Activated CD4-positive, alpha-beta T cell treated with anti-CD3 and anti-CD28 coated beads, Interleukin-2, amount 10 ng/mL, durations not matched to agents 24 days and 14 days (primary cell): ENCODE measurements at regions of chr13 and their contacts with region 1.

Region 1: GRCh38 chr13:94327318-94327717 is 152.2 kb downstream of the DCT start:
- DNase-seq: peak; percentile 74
- H3K4me3 Mint-ChIP-seq: peak overlapping the region; percentile 62
- H3K27ac Mint-ChIP-seq: peak overlapping the region; percentile 72
- H3K4me1 Mint-ChIP-seq: peaks cover 65% of the 10 kb centered on the region
- H3K27me3 Mint-ChIP-seq: peaks cover 2% of the 10 kb centered on the region

Region 2: DNA sequence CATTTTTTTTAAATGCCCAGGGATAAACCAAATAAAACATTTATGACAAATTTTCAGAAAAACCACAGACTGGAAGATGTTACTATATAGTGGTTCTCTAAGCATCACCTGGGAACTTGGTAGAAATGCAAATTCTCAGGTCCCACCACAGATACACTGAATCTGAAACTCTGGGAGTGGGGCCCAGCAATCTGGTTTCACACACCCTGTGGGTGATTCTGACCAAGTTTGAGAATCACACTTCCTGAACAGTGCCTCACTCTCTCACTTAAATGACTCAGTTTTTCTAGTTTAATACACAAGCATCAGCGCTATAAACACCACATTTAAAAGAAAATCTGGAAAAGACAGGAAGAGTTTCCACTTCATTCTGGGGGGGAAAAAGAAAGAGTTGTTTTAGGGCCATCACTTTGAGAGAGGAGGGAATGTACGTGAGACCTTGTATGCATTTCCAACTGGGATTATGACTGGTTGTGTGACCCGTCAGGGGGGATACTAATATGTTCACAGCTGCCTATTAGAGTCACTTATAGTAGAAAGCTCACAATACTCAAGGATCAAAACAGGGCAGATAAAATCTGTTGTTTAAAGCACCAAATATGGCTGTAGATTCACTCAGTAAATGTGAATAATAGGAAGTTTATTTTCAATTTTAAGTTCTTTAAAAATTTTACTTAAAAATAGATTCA is 533.0 kb before region 1 on chr13:
- intact Hi-C with region 1: loop called (anchors 10 kb)
- DNase-seq: peak; percentile 63
- H3K4me3 Mint-ChIP-seq: no peak overlapping the region
- H3K27ac Mint-ChIP-seq: peak overlapping the region; percentile 1
- H3K4me1 Mint-ChIP-seq: peaks cover 8% of the 10 kb centered on the region
- H3K27me3 Mint-ChIP-seq: peaks cover 14% of the 10 kb centered on the region

Region 3: DNA sequence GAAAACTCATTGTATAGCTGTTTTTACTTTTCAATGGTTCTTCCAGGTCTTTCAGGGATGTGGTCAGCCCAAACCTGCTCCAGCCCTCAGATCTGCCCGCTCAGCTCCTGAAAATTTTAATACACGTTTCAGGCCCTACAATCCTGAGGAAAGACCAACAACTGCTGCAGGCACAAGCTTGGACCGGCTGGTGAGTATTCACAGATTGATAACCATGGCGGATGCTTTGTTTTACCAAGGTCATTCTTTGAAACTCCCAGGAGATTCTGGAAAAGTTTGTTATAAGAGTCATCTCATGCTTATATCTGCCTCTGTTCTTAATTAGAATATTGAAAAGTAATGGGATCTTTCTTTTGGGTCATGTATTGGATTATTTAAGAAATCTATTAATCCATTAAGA is 21.4 kb before region 1 on chr13:
- intact Hi-C with region 1: no loop called
- DNase-seq: no peak
- H3K4me3 Mint-ChIP-seq: no peak overlapping the region
- H3K27ac Mint-ChIP-seq: no peak overlapping the region
- H3K4me1 Mint-ChIP-seq: peaks cover 5% of the 10 kb centered on the region
- H3K27me3 Mint-ChIP-seq: peaks cover 8% of the 10 kb centered on the region

Region 4: GRCh38 chr13:94317063-94317491 is 10.2 kb before region 1 on chr13:
- intact Hi-C with region 1: loop called (anchors 1 kb)
- DNase-seq: peak; percentile 74
- H3K4me3 Mint-ChIP-seq: peak overlapping the region; percentile 60
- H3K27ac Mint-ChIP-seq: peak overlapping the region; percentile 78
- H3K4me1 Mint-ChIP-seq: peaks cover 38% of the 10 kb centered on the region
- H3K27me3 Mint-ChIP-seq: no peaks in the 10 kb centered on the region

Region 5: GRCh38 chr13:94345374-94346195 is 18.3 kb after region 1 on chr13:
- intact Hi-C with region 1: loop called (anchors 1 kb)
- DNase-seq: peak; percentile 64
- H3K4me3 Mint-ChIP-seq: no peak overlapping the region
- H3K27ac Mint-ChIP-seq: no peak overlapping the region
- H3K4me1 Mint-ChIP-seq: peaks cover 13% of the 10 kb centered on the region
- H3K27me3 Mint-ChIP-seq: peaks cover 12% of the 10 kb centered on the region

Region 6: DNA sequence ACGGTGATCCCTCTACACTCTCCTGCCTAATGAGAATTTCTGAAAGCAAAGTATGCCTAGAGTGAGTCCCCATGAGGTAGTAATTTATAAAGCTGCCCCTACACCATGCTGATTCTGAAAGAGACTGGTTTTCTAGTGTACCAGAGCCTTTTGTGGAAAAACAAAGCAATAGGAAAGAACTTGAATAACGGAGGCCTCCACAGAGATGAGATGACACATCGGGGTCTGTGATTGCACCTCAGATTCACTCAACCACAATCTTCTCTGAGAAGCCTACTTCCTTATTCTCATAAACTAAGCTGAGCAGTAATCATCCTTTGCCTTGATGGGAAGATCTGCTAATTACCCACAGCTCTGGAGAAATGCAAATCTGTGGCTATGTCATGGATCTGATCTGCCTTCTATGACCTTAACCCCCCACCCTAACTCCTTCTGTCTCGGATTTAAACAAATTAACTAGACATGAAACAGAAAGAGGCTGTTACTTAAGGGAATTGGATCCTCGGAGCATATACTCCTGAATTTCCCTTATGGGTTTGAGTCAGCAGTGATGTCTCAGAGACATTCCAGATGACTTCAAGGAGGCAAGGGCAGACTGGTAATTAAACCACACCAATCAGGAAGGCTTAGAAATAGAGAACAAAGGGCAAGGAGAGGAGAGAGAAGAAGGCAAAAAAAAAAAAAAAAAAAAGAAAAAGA is 24.1 kb after region 1 on chr13:
- intact Hi-C with region 1: loop called (anchors 1 kb)
- DNase-seq: no peak
- H3K4me3 Mint-ChIP-seq: no peak overlapping the region
- H3K27ac Mint-ChIP-seq: peak overlapping the region; percentile 5
- H3K4me1 Mint-ChIP-seq: peaks cover 19% of the 10 kb centered on the region
- H3K27me3 Mint-ChIP-seq: peaks cover 4% of the 10 kb centered on the region